A549 (cell line): ENCODE measurements at regions of chr6 and their contacts with region 1.

Region 1: DNA sequence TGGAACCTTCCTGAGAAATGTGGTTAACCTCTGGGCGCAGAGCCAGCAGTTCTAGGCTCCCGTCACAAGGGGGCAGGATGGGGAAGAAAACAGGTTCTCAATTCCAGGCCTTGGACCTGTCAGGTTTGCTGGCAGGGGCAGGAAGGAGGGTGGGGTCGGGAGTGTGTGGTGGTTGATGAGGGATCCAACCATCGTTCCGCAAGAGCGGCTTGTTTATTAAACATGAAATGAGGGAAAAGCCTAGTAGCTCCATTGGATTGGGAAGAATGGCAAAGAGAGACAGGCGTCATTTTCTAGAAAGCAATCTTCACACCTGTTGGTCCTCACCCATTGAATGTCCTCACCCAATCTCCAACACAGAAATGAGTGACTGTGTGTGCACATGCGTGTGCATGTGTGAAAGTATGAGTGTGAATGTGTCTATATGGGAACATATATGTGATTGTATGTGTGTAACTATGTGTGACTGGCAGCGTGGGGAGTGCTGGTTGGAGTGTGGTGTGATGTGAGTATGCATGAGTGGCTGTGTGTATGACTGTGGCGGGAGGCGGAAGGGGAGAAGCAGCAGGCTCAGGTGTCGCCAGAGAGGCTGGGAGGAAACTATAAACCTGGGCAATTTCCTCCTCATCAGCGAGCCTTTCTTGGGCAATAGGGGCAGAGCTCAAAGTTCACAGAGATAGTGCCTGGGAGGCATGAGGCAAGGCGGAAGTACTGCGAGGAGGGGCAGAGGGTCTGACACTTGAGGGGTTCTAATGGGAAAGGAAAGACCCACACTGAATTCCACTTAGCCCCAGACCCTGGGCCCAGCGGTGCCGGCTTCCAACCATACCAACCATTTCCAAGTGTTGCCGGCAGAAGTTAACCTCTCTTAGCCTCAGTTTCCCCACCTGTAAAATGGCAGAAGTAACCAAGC is 29.6 kb downstream of the SRSF3 start:
- DNase-seq: peak; percentile 62 to 74
- ATAC-seq: peak; percentile 84 to 85
- H3K4me3 ChIP-seq: no peak overlapping the region
- H3K27ac ChIP-seq: peak overlapping the region; percentile 55 to 75; a peak in 5 of 6 replicates
- H3K4me1 ChIP-seq: peaks cover 28% of the 10 kb centered on the region
- CTCF ChIP-seq: peak; percentile 68
- EP300 ChIP-seq: no peak
- POLR2A ChIP-seq: no peak
- RAD21 ChIP-seq: peak; percentile 86 to 87

Region 2: DNA sequence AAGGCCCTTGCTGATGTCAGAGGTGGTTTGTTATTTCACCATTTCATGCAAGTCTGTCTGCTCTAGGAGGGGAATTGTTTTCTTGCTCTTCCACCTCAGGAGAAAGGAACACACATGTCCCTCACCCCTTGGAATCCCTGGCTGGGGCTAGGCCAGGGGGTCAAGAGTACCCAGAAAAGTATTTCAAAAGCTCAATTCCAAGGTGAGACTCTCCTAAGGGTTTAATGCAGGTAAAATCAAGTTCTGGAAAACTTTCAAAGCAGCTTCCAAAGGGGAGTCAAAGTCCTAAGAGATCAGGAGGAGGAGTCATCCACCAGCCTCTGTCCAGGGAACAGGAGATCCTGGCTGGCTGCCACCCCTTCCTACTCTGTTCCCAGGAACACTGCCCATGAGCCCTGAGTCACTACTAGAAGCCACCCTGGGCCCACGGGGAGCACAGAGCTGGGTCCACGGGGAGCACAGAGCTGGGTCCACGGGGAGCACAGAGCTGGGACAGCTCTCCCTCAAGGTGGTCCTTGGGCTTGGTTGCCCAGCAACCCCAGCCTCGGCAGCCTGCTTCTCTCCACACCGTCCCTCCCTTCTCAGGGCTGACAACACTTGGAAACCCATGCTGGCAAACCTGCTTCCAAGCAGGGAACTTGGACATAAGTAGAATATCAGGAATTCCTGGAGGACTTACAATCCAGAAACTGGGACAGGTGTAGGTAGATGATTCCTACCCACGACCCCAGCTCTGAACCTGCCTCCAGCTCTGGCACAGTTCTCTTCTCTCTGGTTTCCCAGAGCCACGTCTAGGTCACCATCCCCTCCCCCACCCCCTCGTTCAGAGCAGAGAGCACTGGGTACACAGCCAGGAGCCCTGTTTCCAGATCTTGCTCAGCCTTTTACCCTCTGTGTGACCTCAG is 19.4 kb after region 1 on chr6:
- CTCF ChIA-PET with region 1: interaction called, 16 read pairs
- POLR2A ChIA-PET with region 1: no interaction called
- DNase-seq: peak; percentile 44 to 73
- ATAC-seq: peak; percentile 94 to 97
- H3K4me3 ChIP-seq: no peak overlapping the region
- H3K27ac ChIP-seq: peak overlapping the region; percentile 91 to 99
- H3K4me1 ChIP-seq: peaks cover 44% of the 10 kb centered on the region
- CTCF ChIP-seq: no peak
- EP300 ChIP-seq: no peak
- POLR2A ChIP-seq: no peak
- RAD21 ChIP-seq: no peak

Region 3: GRCh38 chr6:36666726-36667591 is 43.2 kb after region 1 on chr6:
- CTCF ChIA-PET with region 1: interaction called, 13 read pairs
- POLR2A ChIA-PET with region 1: no interaction called
- DNase-seq: peak in 1 of 2 experiments; percentile 69
- ATAC-seq: peak; percentile 82 to 86
- H3K4me3 ChIP-seq: no peak overlapping the region
- H3K27ac ChIP-seq: peak overlapping the region; percentile 91 to 93
- H3K4me1 ChIP-seq: peaks cover 38% of the 10 kb centered on the region
- CTCF ChIP-seq: no peak
- EP300 ChIP-seq: no peak
- POLR2A ChIP-seq: no peak
- RAD21 ChIP-seq: peak in 1 of 2 experiments; percentile 22; a peak in 2 of 5 replicates

Region 4: GRCh38 chr6:36678518-36679027 is 54.8 kb after region 1 on chr6 and contains the start of gene CDKN1A:
- CTCF ChIA-PET with region 1: interaction called, 123 read pairs
- POLR2A ChIA-PET with region 1: interaction called, 13 read pairs
- DNase-seq: peak; percentile 66 to 86
- ATAC-seq: peak; percentile 77 to 89
- H3K4me3 ChIP-seq: peak within 1 kb of the TSS; percentile 86
- H3K27ac ChIP-seq: peak within 1 kb of the TSS; percentile 86 to 94
- H3K4me1 ChIP-seq: peaks cover 50% of the 10 kb centered on the region
- CTCF ChIP-seq: no peak
- EP300 ChIP-seq: peak in 1 of 2 experiments; percentile 12; a peak in 1 of 5 replicates
- POLR2A ChIP-seq: peak; percentile 98
- RAD21 ChIP-seq: 0 out of 5 replicates have a peak, but pooled peaks of 1 of the 2 experiments have one; percentile 17
- polyA plus RNA-seq, gene CDKN1A: 183 and 192 TPM in 2 replicates

Region 5: DNA sequence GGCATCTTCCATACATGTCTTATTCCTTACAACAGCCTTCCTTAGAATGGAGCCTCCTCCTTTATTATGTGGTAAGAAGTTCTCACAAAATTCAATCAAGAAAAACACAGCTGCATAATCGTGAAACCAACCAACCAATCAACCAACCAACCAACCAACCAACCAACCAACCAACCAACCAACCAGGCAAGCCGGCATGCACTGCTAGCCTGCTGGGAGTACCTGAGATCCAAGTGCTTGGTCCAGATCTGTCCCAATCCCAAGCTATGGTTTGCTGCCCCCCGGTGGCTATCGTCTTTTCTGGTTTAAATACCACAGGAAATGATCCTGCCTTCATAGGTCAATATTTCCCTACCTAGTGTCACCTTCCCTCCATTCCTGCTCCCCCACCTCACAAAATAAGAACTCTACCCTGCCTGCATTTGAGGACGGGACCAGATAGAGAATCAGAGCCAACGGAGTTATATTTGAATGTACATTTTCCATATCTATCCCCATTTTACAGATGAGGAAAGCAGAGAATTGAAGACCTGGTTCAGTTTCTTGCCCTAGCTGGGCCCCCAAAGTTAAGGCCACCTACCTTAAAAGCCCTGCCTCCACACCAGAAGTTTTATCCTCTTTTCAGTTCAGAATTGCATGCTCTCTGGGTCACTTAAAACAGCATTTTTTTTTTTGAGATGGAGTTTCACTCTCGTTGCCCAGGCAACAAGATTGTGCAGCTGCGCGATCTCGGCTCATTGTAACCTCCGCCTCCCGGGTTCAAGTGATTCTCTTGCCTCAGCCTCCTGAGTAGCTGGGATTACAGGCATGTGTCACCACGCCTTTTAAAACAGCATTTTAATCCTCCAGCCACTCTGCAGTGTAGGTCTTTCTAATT is 100.9 kb after region 1 on chr6:
- CTCF ChIA-PET with region 1: interaction called, 27 read pairs
- POLR2A ChIA-PET with region 1: no interaction called
- DNase-seq: peak; percentile 70 to 72
- ATAC-seq: peak; percentile 78 to 92
- H3K4me3 ChIP-seq: no peak overlapping the region
- H3K27ac ChIP-seq: no peak overlapping the region
- H3K4me1 ChIP-seq: no peaks in the 10 kb centered on the region
- CTCF ChIP-seq: peak; percentile 68
- EP300 ChIP-seq: no peak
- POLR2A ChIP-seq: no peak
- RAD21 ChIP-seq: peak; percentile 76 to 82